Activated CD4-positive, alpha-beta T cell treated with anti-CD3 and anti-CD28 coated beads, Interleukin-2, amount 10 ng/mL, durations not matched to agents 24 days and 14 days (primary cell): ENCODE measurements at regions of chrX and their contacts with region 1.

Region 1: GRCh38 chrX:154990496-154990895 is 32.0 kb downstream of the F8 start:
- DNase-seq: no peak
- H3K4me3 Mint-ChIP-seq: no peak overlapping the region
- H3K27ac Mint-ChIP-seq: no peak overlapping the region
- H3K4me1 Mint-ChIP-seq: peaks cover 12% of the 10 kb centered on the region
- H3K27me3 Mint-ChIP-seq: peaks cover 10% of the 10 kb centered on the region

Region 2: GRCh38 chrX:154443992-154444754 is 546.3 kb before region 1 on chrX and contains the start of gene FAM50A:
- intact Hi-C with region 1: no loop called
- DNase-seq: peak; percentile 93
- H3K4me3 Mint-ChIP-seq: peak within 1 kb of the TSS; percentile 80
- H3K27ac Mint-ChIP-seq: peak within 1 kb of the TSS; percentile 80
- H3K4me1 Mint-ChIP-seq: peaks cover 8% of the 10 kb centered on the region
- H3K27me3 Mint-ChIP-seq: no peaks in the 10 kb centered on the region
- total RNA-seq, gene FAM50A: 85.4 and 85.9 TPM in 2 replicates

Region 3: GRCh38 chrX:155056877-155057792 is 66.6 kb after region 1 on chrX:
- intact Hi-C with region 1: loop called (anchors 2 kb)
- DNase-seq: peak; percentile 82
- H3K4me3 Mint-ChIP-seq: peak overlapping the region; percentile 71
- H3K27ac Mint-ChIP-seq: peak overlapping the region; percentile 15
- H3K4me1 Mint-ChIP-seq: peaks cover 17% of the 10 kb centered on the region
- H3K27me3 Mint-ChIP-seq: no peaks in the 10 kb centered on the region